H1 (cell line): ENCODE measurements at regions of chr5 and their contacts with region 1.

Region 1: DNA sequence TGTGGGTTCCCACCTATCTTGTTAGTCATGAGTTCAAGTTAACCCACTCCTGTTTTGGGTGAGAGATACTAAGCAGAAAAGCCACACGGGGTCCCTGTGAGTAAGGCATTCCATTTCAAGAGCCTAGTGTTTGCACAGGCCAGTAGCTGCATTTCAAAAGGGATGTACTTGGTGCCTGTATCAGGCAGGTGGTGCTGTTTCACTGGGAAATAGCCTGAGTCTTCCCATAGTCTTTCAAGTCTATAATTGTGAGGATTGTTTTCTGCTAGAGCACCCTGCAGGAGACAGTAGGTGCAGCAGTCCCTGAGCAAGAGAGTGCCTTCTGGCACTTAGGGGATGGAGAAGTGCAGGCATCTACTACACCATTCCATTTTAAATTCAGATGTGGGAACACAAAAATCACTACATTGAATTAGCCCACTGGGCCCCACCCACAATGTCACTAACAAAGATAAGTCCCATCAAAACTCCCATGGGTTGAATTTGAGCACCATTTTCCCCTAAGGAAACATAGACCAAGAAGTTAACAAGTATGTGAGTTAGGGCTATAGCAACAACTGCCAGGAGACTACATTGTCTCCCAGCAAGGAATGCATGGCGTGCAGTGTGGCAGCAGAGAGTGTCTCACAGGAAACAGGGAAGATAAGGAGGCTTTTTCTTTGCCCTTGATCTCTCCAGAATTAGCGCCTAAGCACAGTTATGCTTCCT is 263.2 kb downstream of the COX7C start:
- DNase-seq: peak; percentile 55 to 60
- H3K4me3 ChIP-seq: no peak overlapping the region
- H3K27ac ChIP-seq: 0 out of 2 replicates have a peak overlapping the region, but pooled peaks have one; percentile 19
- H3K4me1 ChIP-seq: peaks cover 0 to 14% (median 7%) of the 10 kb centered on the region in 4 experiments; a peak in 3 of 7 replicates
- H3K27me3 ChIP-seq: no peaks in the 10 kb centered on the region
- CTCF ChIP-seq: peak; percentile 12 to 99 (median 98)
- EP300 ChIP-seq: no peak
- POLR2A ChIP-seq: no peak
- RAD21 ChIP-seq: peak; percentile 98 to 99

Region 2: DNA sequence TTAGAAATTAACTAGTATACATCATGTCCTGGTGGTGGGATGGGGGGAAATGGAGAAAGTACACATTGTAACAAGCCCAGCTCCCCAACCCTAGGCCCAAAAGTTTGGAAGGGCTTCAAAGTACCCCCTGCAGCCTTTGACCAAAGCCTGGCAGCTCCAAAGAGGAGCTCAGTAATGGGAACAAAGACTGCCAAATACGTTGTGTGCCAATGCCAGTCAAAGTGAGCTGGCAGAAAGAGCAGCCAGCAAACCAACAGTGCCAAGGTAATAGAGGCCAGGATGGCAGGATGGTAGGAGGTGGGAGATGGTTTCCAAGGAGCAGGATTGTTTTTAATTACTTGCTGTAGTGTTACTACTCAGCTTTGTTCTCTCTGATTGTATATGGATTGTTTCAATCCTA is 14.9 kb before region 1 on chr5:
- CTCF ChIA-PET with region 1: interaction called, 19 read pairs
- POLR2A ChIA-PET with region 1: no interaction called
- DNase-seq: no peak
- H3K4me3 ChIP-seq: no peak overlapping the region
- H3K27ac ChIP-seq: no peak overlapping the region
- H3K4me1 ChIP-seq: peaks cover 0 to 4% (median 0%) of the 10 kb centered on the region in 4 experiments; a peak in 1 of 7 replicates
- H3K27me3 ChIP-seq: no peaks in the 10 kb centered on the region
- CTCF ChIP-seq: no peak
- EP300 ChIP-seq: no peak
- POLR2A ChIP-seq: no peak
- RAD21 ChIP-seq: no peak

Region 3: GRCh38 chr5:86968301-86968753 is 87.4 kb after region 1 on chr5:
- CTCF ChIA-PET with region 1: interaction called, 44 read pairs
- POLR2A ChIA-PET with region 1: no interaction called
- DNase-seq: no peak
- H3K4me3 ChIP-seq: no peak overlapping the region
- H3K27ac ChIP-seq: no peak overlapping the region
- H3K4me1 ChIP-seq: peaks cover 0 to 2% (median 0%) of the 10 kb centered on the region in 4 experiments; a peak in 1 of 7 replicates
- H3K27me3 ChIP-seq: no peaks in the 10 kb centered on the region
- CTCF ChIP-seq: peak in 2 of 3 experiments; percentile 8 to 30; a peak in 2 of 4 replicates
- EP300 ChIP-seq: no peak
- POLR2A ChIP-seq: no peak
- RAD21 ChIP-seq: peak in 1 of 2 experiments; percentile 69

Region 4: GRCh38 chr5:87008751-87009560 is 128.0 kb after region 1 on chr5:
- CTCF ChIA-PET with region 1: interaction called, 20 read pairs
- POLR2A ChIA-PET with region 1: no interaction called
- DNase-seq: no peak
- H3K4me3 ChIP-seq: no peak overlapping the region
- H3K27ac ChIP-seq: no peak overlapping the region
- H3K4me1 ChIP-seq: no peaks in the 10 kb centered on the region
- H3K27me3 ChIP-seq: no peaks in the 10 kb centered on the region
- CTCF ChIP-seq: no peak
- EP300 ChIP-seq: no peak
- POLR2A ChIP-seq: no peak
- RAD21 ChIP-seq: no peak

Region 5: DNA sequence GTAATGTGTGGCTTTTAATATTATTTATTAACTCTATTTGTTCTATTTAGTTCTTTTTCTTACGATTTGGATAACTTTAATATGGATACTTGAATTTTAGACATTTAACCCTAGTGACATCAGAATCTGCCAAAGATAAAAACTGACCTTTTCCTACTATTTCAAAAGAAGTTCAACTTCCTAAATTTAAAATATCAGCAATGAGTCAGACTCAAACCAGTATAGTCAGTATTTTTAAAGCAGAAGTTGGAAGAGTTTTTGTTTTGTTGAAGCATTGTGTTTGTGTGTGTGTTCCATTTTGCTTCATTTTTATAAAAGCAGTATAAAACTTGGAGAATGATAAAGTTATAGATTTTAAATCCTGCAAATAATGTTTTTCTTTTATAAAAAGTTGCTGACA is 135.0 kb after region 1 on chr5:
- CTCF ChIA-PET with region 1: interaction called, 20 read pairs
- POLR2A ChIA-PET with region 1: no interaction called
- DNase-seq: no peak
- H3K4me3 ChIP-seq: no peak overlapping the region
- H3K27ac ChIP-seq: no peak overlapping the region
- H3K4me1 ChIP-seq: peaks cover 0 to 5% (median under 1%) of the 10 kb centered on the region in 4 experiments; a peak in 2 of 7 replicates
- H3K27me3 ChIP-seq: no peaks in the 10 kb centered on the region
- CTCF ChIP-seq: no peak
- EP300 ChIP-seq: no peak
- POLR2A ChIP-seq: no peak
- RAD21 ChIP-seq: no peak